ENCODE measurements at regions of chr11 and their contacts with region 1.

Region 1: DNA sequence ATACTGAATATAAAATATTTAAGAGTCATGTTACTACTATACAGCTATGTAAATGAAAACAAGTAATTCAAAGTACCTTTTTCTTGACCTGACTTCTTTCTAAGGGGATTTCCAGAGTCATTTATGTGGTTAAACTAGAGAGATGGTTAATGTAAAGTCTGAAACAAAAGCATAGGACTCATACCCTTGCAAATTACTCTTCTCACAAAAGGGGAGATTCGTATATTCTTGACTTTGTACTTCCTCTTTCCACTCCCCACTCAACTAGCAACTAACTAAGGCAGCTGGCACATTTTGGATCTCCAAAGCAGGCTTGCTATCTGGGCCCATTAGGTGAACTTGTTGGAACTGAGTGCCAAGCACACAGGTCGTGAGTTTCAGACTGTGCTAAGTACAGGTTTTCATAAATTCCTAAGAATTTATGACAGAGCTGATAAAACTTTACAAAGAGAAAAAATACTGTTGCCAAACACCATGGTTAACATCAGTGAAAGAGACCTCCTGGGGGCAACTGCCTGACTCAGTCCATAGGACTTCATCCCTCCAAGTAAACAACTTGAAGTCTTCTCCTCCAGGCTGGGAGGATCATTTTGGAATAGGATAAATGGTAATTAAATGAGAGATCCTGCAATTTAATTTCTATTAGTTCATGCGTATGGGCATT is 77.0 kb upstream of the DDI1 start:
- DNase-seq: peak; percentile 83
- ATAC-seq: peak; percentile 99
- H3K4me3 ChIP-seq: no peak overlapping the region
- H3K27ac ChIP-seq: peak overlapping the region; percentile 53
- H3K4me1 ChIP-seq: peaks cover 11% of the 10 kb centered on the region; the same call in 1 of the 2 replicates
- H3K27me3 ChIP-seq: no peaks in the 10 kb centered on the region
- CTCF ChIP-seq: no peak
- EP300 ChIP-seq: peak in 1 of 2 experiments; percentile 82; a peak in 1 of 4 replicates
- POLR2A ChIP-seq: no peak
- RAD21 ChIP-seq: no peak

Region 2: DNA sequence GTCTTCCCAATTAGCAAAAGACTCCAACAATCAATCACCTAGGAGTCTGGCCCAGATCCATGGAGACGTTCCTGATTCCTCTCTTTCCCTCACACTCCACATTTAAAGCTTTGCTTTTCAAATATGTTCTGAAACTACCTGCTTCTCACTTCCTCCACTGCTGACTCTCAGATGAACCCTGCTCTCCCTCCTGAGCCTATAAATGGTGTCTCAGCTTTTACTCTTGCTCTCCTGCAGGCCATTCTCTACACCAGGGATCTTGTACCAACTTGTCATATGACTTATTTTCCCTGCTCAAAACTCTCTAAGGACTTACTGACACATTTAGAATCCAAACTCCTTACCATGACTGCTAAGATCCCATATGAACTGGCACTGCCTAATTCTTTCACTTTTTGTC is 61.3 kb before region 1 on chr11:
- CTCF ChIA-PET with region 1: interaction called, 4 read pairs
- POLR2A ChIA-PET with region 1: no interaction called
- RAD21 ChIA-PET with region 1: interaction called, 3 read pairs
- SMC1A ChIA-PET with region 1: interaction called, 15 read pairs
- in situ Hi-C with region 1: no loop called
- intact Hi-C with region 1: no loop called
- DNase-seq: peak; percentile 40
- ATAC-seq: peak; percentile 86
- H3K4me3 ChIP-seq: peak overlapping the region; percentile 66; the same call in 1 of the 2 replicates
- H3K27ac ChIP-seq: peak overlapping the region; percentile 73
- H3K4me1 ChIP-seq: peaks cover 37% of the 10 kb centered on the region
- H3K27me3 ChIP-seq: no peaks in the 10 kb centered on the region
- CTCF ChIP-seq: no peak
- EP300 ChIP-seq: peak in 1 of 2 experiments; percentile 59; a peak in 2 of 4 replicates
- POLR2A ChIP-seq: no peak
- RAD21 ChIP-seq: no peak

Region 3: DNA sequence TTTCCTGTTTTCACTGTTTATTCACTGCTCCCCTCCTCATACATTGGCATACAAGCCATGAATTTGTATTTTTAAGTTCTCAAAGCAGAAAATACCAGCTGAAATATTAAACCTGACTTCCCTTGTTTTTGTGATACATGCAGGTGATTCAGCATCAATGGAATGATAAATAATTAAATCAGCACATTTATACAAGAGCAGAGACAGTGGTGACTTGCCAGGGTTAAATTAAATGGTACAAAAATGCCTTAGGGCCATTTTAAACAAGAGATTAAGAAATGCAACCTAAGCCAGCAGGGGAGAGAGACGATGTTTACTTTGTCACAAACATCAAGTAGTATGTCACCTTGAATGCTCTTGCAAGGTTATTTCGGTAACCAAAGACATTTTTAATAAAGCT is 18.9 kb before region 1 on chr11:
- CTCF ChIA-PET with region 1: interaction called, 11 read pairs
- POLR2A ChIA-PET with region 1: interaction called, 5 read pairs
- RAD21 ChIA-PET with region 1: interaction called, 5 read pairs
- SMC1A ChIA-PET with region 1: interaction called, 8 read pairs
- in situ Hi-C with region 1: no loop called
- intact Hi-C with region 1: no loop called
- DNase-seq: no peak
- ATAC-seq: no peak
- H3K4me3 ChIP-seq: no peak overlapping the region
- H3K27ac ChIP-seq: no peak overlapping the region
- H3K4me1 ChIP-seq: no peaks in the 10 kb centered on the region
- H3K27me3 ChIP-seq: no peaks in the 10 kb centered on the region
- CTCF ChIP-seq: no peak
- EP300 ChIP-seq: no peak
- POLR2A ChIP-seq: no peak
- RAD21 ChIP-seq: no peak

Region 4: DNA sequence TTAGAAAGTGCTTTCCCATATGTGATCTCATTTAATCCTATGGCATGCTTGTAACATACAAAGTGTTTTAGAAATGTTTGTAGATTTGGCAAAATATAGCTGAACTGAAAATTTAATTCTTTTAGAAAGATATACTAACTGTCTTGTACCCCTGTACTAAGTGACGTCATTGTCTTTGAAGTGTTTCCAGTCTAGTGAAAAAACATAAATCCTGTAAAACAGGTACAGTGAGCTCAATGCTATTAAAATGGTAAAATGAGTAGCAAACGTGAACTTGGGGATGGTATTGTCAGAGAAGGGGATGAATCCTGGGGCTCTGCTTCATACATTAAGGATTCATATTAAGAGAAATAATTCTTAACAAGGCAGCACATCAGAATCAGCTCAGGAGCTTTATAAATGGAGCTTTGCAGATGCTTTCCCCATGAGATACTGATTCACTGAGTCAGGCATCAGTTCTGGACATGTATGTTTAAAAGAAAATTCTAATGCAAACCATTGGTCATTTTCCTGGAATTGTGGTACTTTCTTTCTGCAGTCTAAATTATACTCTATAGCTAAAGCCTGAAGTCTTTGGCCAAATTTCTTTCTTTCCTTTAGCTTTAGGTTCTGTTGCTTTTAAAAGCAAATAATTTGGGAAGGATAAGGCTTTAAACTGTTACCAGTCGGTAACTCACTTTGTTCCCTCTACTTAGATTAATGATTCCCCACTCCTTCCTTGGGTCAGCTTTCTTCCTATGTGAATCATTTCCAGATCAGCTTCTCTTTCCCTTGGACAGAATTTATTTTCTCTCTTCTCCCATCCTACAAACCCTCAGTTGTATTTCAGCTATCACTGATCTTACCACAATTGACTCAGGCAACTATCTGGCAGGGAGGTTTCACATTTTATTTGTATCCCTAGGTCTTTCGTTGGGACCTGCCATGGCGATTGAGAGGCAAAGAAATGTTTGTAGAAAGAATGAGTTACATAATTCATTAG is 19.5 kb after region 1 on chr11:
- CTCF ChIA-PET with region 1: interaction called, 3 read pairs
- POLR2A ChIA-PET with region 1: no interaction called
- RAD21 ChIA-PET with region 1: interaction called, 11 read pairs
- SMC1A ChIA-PET with region 1: interaction called, 8 read pairs
- in situ Hi-C with region 1: no loop called
- intact Hi-C with region 1: no loop called
- DNase-seq: no peak
- ATAC-seq: no peak
- H3K4me3 ChIP-seq: no peak overlapping the region
- H3K27ac ChIP-seq: no peak overlapping the region
- H3K4me1 ChIP-seq: no peaks in the 10 kb centered on the region
- H3K27me3 ChIP-seq: no peaks in the 10 kb centered on the region; a peak in 2 of 4 replicates
- CTCF ChIP-seq: no peak
- EP300 ChIP-seq: no peak
- POLR2A ChIP-seq: no peak
- RAD21 ChIP-seq: no peak

Region 5: GRCh38 chr11:104015649-104016415 is 56.4 kb after region 1 on chr11:
- CTCF ChIA-PET with region 1: interaction called, 6 read pairs
- POLR2A ChIA-PET with region 1: no interaction called
- RAD21 ChIA-PET with region 1: interaction called, 12 read pairs
- SMC1A ChIA-PET with region 1: interaction called, 12 read pairs
- in situ Hi-C with region 1: no loop called
- intact Hi-C with region 1: no loop called
- DNase-seq: peak; percentile 23
- ATAC-seq: peak; percentile 79
- H3K4me3 ChIP-seq: no peak overlapping the region
- H3K27ac ChIP-seq: no peak overlapping the region
- H3K4me1 ChIP-seq: no peaks in the 10 kb centered on the region
- H3K27me3 ChIP-seq: no peaks in the 10 kb centered on the region
- CTCF ChIP-seq: no peak
- EP300 ChIP-seq: no peak
- POLR2A ChIP-seq: no peak
- RAD21 ChIP-seq: no peak